ENCODE measurements at regions of chr3 and their contacts with region 1.

Region 1: DNA sequence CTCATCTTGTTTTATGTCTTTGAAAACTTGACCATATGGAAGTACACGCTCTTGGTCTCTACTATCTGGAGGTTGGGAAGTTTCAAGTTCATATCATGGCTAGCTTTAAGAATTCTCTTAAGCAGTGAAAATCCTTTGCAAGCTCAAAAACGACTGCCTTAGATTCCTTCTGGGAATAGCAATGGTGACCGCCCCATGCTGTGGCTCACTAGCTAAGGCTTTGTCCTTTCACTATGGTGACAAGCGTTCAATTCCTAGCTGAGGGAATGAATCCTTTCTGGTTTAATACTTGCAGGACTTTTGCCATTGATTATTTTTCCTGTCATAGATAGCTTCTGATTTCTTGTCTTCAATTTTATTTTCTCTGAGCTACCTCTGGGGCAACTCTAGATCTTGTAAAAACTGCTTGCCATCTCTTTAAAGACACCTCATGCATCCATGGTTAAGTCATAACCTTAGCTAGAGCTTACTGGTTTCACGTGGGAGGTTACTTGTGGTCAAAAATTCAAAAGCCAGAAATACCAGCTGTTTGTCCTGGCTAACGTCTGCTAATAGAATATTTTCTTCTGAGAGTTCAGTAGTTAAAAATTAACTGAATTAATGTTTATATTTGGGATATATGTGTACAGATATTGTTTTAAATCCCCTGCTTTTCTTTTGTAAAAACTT is 673.4 kb upstream of the CBLB start:
- DNase-seq: no peak
- H3K4me3 ChIP-seq: no peak overlapping the region
- H3K27ac ChIP-seq: no peak overlapping the region
- H3K4me1 ChIP-seq: no peaks in the 10 kb centered on the region
- H3K27me3 ChIP-seq: no peaks in the 10 kb centered on the region
- CTCF ChIP-seq: no peak

Region 2: GRCh38 chr3:106609666-106610301 is 67.5 kb after region 1 on chr3:
- CTCF ChIA-PET with region 1: no interaction called
- POLR2A ChIA-PET with region 1: no interaction called
- intact Hi-C with region 1: no loop called
- DNase-seq: peak; percentile 64 to 73
- H3K4me3 ChIP-seq: no peak overlapping the region
- H3K27ac ChIP-seq: no peak overlapping the region
- H3K4me1 ChIP-seq: peaks cover 11% of the 10 kb centered on the region
- H3K27me3 ChIP-seq: no peaks in the 10 kb centered on the region
- CTCF ChIP-seq: peak; percentile 98

Region 3: DNA sequence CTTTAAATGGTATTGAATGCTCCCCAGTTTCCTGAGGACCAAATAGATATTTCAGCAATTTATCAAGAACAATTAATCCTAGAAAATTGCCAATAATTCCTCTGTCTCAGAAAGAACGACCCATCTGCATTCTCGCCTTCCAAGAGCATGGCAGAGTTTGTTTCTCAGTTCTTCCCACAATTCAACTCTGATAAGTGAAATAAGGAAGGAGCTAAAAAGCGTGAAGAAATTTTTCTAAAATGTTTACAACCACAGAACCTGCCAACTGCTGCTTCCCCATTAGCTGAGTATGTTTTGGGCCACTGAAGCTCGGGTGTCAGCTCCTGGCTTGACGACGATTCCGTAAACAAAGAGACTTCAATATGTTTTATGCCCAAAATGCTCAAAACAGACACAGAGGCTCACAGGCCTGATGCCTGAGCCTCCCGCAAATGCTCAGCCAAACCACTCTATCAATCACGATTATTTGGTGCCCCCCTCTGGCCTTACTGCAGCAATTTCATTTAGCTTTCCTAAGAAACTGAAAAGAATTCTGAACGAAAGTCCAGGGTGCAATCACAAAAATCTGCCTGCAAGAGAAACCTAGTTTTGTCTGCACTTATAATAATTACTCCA is 575.8 kb after region 1 on chr3:
- CTCF ChIA-PET with region 1: no interaction called
- POLR2A ChIA-PET with region 1: interaction called, 13 read pairs
- intact Hi-C with region 1: no loop called
- DNase-seq: peak in 1 of 2 experiments; percentile 38
- H3K4me3 ChIP-seq: no peak overlapping the region
- H3K27ac ChIP-seq: no peak overlapping the region
- H3K4me1 ChIP-seq: no peaks in the 10 kb centered on the region
- H3K27me3 ChIP-seq: no peaks in the 10 kb centered on the region
- CTCF ChIP-seq: peak; percentile 83

Measured in PC-9 (cell line).